WTC11 (cell line): ENCODE measurements at regions of chr1 and their contacts with region 1.

Region 1: DNA sequence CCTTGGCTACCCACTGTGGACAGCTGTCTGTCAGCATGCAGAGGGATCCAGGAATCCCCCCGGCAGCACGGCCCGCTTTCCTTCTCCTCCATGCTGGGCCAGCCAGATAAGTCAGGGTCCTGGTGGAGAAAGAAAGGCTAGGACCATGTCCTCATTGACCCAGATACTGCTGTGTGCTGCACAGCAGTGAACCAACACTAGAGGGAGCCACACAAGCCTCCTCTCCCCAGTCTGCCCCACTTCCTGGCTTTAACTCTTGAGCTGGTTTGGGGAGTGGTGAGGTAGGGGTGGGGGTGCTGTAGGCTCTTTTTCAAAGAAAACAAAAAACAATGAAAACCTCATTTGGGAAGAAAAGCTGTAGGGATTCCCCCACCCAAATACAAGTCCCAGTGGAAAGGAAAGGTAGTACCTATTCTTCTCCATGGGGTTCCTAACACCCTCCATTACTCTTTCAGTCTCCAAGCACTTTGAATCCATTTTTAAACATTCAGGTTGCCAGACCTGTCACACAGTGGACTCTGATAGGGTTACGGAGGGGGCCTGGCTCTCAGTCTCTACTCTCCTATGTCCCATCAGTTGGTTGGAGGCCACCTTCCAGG is 84.9 kb upstream of the CD1D start:
- DNase-seq: peak; percentile 70
- ATAC-seq: peak; percentile 84
- H3K4me3 Mint-ChIP-seq: no peak overlapping the region
- H3K27ac Mint-ChIP-seq: no peak overlapping the region
- H3K4me1 Mint-ChIP-seq: peaks cover 51% of the 10 kb centered on the region
- H3K27me3 Mint-ChIP-seq: no peaks in the 10 kb centered on the region
- CTCF ChIP-seq: peak; percentile 75

Region 2: GRCh38 chr1:157963713-157964112 is 132.1 kb before region 1 on chr1:
- CTCF ChIA-PET with region 1: interaction called, 20 read pairs
- POLR2A ChIA-PET with region 1: no interaction called
- DNase-seq: peak; percentile 79
- ATAC-seq: peak; percentile 90
- H3K4me3 Mint-ChIP-seq: no peak overlapping the region
- H3K27ac Mint-ChIP-seq: no peak overlapping the region
- H3K4me1 Mint-ChIP-seq: peaks cover 14% of the 10 kb centered on the region
- H3K27me3 Mint-ChIP-seq: peaks cover 3% of the 10 kb centered on the region; the same call in 1 of the 2 replicates
- CTCF ChIP-seq: peak; percentile 89

Region 3: DNA sequence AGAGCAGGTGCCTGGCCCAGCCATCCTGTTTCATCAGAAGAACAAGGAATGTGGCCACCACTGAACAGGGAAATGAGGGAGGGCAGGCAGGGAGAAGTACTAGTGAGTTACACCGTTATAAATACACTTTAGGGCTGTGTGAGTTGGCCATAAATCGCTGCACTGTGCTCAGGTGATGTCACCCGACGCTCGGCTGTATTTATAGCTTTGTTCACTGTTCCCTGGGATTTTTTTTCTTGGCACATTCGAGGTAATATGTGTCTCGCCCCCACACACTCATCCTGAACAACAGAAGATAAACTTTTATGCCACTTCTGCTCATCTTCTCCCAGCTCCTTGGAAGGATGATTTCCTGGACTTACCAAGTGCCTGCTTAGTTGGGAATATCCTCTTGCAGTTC is 111.4 kb before region 1 on chr1:
- CTCF ChIA-PET with region 1: interaction called, 36 read pairs
- POLR2A ChIA-PET with region 1: no interaction called
- DNase-seq: no peak
- ATAC-seq: no peak
- H3K4me3 Mint-ChIP-seq: no peak overlapping the region
- H3K27ac Mint-ChIP-seq: no peak overlapping the region
- H3K4me1 Mint-ChIP-seq: peaks cover 35% of the 10 kb centered on the region
- H3K27me3 Mint-ChIP-seq: peaks cover 6% of the 10 kb centered on the region; the same call in 1 of the 2 replicates
- CTCF ChIP-seq: no peak

Region 4: GRCh38 chr1:158055854-158056253 is 40.0 kb before region 1 on chr1:
- CTCF ChIA-PET with region 1: interaction called, 13 read pairs
- POLR2A ChIA-PET with region 1: no interaction called
- DNase-seq: no peak
- ATAC-seq: peak; percentile 50; the same call in 1 of the 2 replicates
- H3K4me3 Mint-ChIP-seq: no peak overlapping the region
- H3K27ac Mint-ChIP-seq: peak overlapping the region; percentile 55; the same call in 1 of the 2 replicates
- H3K4me1 Mint-ChIP-seq: peaks cover 63% of the 10 kb centered on the region
- H3K27me3 Mint-ChIP-seq: no peaks in the 10 kb centered on the region
- CTCF ChIP-seq: no peak

Region 5: DNA sequence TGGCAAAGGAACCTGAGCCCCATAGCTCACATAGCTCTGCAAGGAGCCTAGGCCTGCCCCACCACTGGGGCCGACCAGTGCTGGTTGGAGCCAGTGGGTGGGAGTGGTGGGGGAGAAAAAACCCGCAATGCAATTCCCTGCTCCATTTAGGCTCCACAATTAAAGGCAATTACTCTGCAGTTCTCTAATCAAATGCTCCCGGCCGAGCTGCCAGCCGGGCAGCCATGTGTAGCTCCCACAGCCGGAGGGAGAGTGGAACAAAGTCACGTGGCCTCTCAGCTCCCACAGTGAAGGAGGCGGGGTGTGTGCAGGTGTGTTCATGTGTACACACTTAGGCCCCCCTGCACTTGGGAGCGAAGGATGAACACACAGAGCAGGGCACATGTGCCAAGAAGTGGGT is 20.8 kb before region 1 on chr1:
- CTCF ChIA-PET with region 1: interaction called, 31 read pairs
- POLR2A ChIA-PET with region 1: no interaction called
- DNase-seq: no peak
- ATAC-seq: no peak
- H3K4me3 Mint-ChIP-seq: no peak overlapping the region
- H3K27ac Mint-ChIP-seq: no peak overlapping the region
- H3K4me1 Mint-ChIP-seq: peaks cover 79% of the 10 kb centered on the region
- H3K27me3 Mint-ChIP-seq: no peaks in the 10 kb centered on the region
- CTCF ChIP-seq: no peak

Region 6: DNA sequence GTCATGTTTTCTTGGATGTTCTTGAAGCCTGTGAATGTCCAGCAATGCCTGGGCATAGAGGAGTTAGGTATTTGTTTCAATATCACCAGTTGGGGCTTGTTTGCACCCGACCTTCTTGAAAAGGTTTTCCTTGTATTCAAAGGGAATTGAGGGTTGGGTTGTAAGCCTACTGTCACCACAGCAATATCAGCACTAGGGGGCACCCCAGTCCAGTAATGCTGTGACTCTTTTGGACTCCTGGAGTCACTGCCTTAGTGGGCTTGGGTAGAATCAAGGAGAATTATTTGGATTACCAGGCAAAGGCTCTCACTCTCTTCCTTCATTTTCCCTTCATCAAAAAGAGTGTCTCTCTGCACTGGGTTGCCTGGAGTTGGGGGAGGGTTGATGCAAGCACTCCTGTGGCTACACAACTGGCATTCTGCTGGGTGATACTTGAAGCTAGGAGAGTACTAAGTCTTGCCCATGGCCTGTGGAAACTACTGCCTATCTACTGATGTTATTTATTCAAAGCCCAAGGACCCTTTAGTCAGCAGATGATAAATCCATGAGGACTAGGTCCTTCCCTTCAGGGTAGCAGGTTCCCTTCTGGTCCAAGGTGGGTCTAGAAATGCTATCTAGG is 410.6 kb after region 1 on chr1:
- CTCF ChIA-PET with region 1: no interaction called
- POLR2A ChIA-PET with region 1: no interaction called
- DNase-seq: peak; percentile 82
- ATAC-seq: peak; percentile 98
- H3K4me3 Mint-ChIP-seq: no peak overlapping the region
- H3K27ac Mint-ChIP-seq: no peak overlapping the region
- H3K4me1 Mint-ChIP-seq: peaks cover 16% of the 10 kb centered on the region
- H3K27me3 Mint-ChIP-seq: no peaks in the 10 kb centered on the region; the same call in 1 of the 2 replicates
- CTCF ChIP-seq: peak; percentile 74